ENCODE measurements at regions of chr3 and their contacts with region 1.

Region 1: DNA sequence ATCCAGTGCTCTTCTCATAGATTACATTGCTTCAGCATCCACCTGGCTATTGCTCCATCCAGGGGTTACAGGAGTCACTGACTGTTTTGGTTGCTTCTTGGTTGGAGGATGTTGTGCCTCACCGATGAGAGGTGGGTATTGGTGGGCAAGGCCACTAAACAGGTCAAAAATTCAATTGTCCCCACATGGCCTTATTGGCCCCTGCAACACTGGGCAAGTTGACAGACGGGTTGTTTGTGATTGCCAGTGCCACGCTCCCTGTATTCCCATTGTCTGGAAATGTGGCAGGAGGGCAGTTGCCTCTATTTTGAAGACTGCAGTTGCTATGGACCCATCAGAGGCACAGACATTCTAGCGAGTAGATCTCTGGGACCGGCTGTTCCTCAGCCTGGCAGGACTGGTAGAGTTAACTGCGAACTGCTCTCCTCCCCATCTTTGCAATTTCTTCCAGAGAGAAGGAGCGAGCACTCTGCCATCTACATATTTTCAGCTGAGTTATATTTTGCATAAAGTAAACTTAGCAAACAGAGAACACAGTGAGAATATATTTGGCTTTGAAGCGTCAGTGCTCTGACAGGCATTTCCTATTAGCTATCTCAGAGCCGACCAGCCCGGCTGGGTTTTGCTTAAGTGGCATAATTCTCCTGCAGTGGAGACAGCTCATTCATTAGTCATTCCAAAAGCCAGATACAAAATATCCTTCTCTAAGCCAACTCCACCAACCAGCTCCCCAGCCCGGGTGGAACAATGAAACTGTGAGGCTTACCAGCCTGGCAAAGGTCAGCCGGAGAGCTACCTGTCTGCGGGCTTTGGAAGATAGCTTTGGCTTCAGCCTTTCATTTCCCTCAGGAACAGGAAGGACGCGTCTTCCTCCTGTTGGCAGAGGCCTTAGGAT is 26.0 kb upstream of the MAGEF1 start:
- DNase-seq: peak; percentile 23
- H3K4me3 ChIP-seq: peak overlapping the region in 1 of 3 experiments; percentile 33
- H3K27ac ChIP-seq: peak overlapping the region; percentile 42
- H3K4me1 ChIP-seq: peaks cover 12% of the 10 kb centered on the region
- H3K27me3 ChIP-seq: peaks cover 0 to 4% of the 10 kb centered on the region in 2 experiments
- CTCF ChIP-seq: no peak
- POLR2A ChIP-seq: no peak

Region 2: GRCh38 chr3:184703657-184704056 is 34.2 kb before region 1 on chr3:
- CTCF ChIA-PET with region 1: no interaction called
- POLR2A ChIA-PET with region 1: no interaction called
- dilution Hi-C with region 1: no loop called
- intact Hi-C with region 1: no loop called
- DNase-seq: no peak
- H3K4me3 ChIP-seq: no peak overlapping the region
- H3K27ac ChIP-seq: no peak overlapping the region
- H3K4me1 ChIP-seq: no peaks in the 10 kb centered on the region
- H3K27me3 ChIP-seq: peaks cover 0 to 3% of the 10 kb centered on the region in 2 experiments
- CTCF ChIP-seq: no peak
- POLR2A ChIP-seq: no peak

Region 3: DNA sequence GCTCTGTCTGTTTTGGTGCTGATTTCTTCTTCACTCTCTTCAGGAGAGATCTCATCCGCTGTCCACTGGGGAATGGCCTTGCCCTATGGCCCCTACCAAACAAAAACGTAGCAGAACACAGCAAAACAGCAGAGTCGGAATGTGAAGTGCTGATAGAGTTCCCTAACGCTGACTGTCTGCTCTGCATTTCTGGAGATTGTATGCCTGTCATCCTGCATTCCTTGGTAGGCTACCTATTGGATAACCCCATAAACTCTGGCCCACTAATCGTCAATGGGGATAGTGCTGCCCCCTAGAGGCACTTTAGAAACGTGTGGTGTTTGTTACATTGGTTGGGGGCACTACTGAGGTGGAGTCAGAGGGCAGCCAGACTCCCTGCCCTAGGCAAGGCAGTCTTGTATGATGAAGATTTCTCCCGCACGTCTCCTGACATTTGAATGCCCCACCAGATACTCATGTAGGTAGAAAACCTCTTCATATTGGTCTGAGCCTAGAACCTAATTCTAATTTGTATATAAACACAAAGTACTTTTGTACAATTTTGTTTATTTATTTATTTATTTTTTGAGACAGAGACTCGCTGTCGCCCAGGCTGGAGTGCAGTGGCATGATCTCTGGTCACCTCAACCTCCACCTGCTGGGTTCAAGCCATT is 10.4 kb before region 1 on chr3:
- CTCF ChIA-PET with region 1: interaction called, 30 read pairs
- POLR2A ChIA-PET with region 1: no interaction called
- dilution Hi-C with region 1: no loop called
- intact Hi-C with region 1: no loop called
- DNase-seq: peak; percentile 65
- H3K4me3 ChIP-seq: no peak overlapping the region
- H3K27ac ChIP-seq: no peak overlapping the region
- H3K4me1 ChIP-seq: no peaks in the 10 kb centered on the region
- H3K27me3 ChIP-seq: peaks cover 3 to 7% of the 10 kb centered on the region in 2 experiments
- CTCF ChIP-seq: peak; percentile 73 to 74
- POLR2A ChIP-seq: no peak

Measured in endothelial cell of umbilical vein (primary cell).